Adrenal gland (tissue), 19 donors: ENCODE measurements at regions of chr3 and their contacts with region 1.

Region 1: DNA sequence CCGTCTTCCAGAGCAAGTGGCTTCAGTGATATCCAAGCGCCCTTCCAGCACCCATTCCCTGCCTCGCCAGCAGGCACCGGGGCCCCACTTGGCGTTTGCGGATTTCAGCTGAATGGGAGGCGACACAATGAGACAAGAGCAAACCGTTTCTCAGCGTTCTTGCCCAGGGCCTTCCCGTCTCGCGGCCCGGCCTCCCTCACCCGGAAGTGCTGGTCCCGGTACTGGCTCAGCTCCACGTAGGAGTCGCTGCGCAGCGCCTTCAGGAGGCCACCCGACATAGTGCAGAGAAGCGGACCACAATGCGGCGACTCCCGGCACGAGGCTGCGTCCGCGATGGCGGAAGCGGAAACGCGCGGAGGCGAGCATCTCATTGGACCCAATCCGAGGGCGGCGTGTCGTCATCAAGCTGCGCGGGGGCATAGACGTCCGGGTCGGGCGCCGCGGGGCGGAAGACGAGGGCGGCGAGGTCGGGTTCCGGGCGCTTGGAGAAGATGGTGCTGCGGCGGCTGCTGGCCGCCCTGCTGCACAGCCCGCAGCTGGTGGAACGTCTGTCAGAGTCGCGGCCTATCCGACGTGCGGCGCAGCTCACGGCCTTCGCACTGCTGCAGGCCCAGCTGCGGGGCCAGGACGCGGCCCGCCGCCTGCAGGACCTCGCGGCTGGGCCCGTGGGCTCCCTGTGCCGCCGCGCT is at the start of gene NCBP2:
- DNase-seq: peak; percentile 98 to 99 (median 99)
- H3K4me3 ChIP-seq: peak within 1 kb of the TSS; percentile 65 to 100 (median 84)
- H3K27ac ChIP-seq: peak within 1 kb of the TSS; percentile 57 to 97 (median 89)
- H3K4me1 ChIP-seq: peaks cover 18 to 26% of the 10 kb centered on the region in 2 donors
- H3K27me3 ChIP-seq: no peaks in the 10 kb centered on the region
- CTCF ChIP-seq: peak; percentile 20 to 70 (median 62)
- POLR2A ChIP-seq: peak; percentile 67 to 86
- total RNA-seq, gene NCBP2: 38.5 to 77.8 (median 60.5) TPM

Region 2: GRCh38 chr3:196726788-196727675 is 215.3 kb before region 1 on chr3:
- intact Hi-C with region 1: no loop called
- DNase-seq: no peak
- H3K4me3 ChIP-seq: no peak overlapping the region
- H3K27ac ChIP-seq: no peak overlapping the region
- H3K4me1 ChIP-seq: no peaks in the 10 kb centered on the region
- H3K27me3 ChIP-seq: no peaks in the 10 kb centered on the region
- CTCF ChIP-seq: no peak
- POLR2A ChIP-seq: no peak

Region 3: DNA sequence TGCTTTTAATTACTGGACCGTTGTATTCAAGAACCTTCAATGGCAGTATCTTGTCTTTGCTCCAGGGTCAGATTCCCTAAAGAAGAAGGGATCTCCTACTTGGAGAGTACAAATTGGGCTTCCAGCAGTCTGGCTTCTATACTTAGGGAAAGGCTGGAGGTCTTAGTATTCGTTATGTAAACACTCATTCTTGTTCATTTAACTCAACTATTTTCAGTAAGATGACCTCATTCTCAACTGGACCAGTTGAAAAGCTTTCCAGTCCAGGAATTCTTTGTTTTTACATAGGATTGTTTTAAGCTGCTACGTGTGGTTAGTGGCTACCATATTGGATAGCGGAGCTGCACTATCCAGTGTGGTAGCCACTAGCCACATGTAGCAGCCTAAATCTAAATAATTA is 70.1 kb before region 1 on chr3:
- intact Hi-C with region 1: loop called in 1 of 2 experiments (anchors 10 kb)
- DNase-seq: no peak
- H3K4me3 ChIP-seq: no peak overlapping the region
- H3K27ac ChIP-seq: no peak overlapping the region
- H3K4me1 ChIP-seq: peaks cover 9 to 22% of the 10 kb centered on the region in 2 donors
- H3K27me3 ChIP-seq: no peaks in the 10 kb centered on the region
- CTCF ChIP-seq: no peak
- POLR2A ChIP-seq: no peak

Region 4: DNA sequence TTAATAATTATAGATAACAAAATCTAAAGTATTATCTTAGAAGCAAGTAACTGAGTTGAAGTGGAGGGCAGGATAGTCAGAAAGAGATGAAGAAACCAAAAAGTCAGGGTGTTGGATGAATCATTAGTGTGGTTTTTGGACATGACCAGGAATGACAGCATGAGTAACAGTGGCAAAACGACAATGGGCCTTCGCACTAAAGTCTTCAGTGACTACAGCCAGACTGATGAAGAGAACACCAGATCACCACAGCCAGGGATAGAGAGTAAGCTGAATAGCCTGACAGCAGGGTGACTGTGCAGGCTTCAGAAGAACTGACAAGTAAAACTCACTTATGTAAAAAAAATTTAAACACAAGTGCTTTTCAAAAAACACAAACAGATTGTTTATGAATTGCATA is 183.3 kb after region 1 on chr3:
- intact Hi-C with region 1: no loop called
- DNase-seq: no peak
- H3K4me3 ChIP-seq: no peak overlapping the region
- H3K27ac ChIP-seq: no peak overlapping the region
- H3K4me1 ChIP-seq: no peaks in the 10 kb centered on the region
- H3K27me3 ChIP-seq: no peaks in the 10 kb centered on the region
- CTCF ChIP-seq: no peak
- POLR2A ChIP-seq: no peak

Region 5: GRCh38 chr3:197203714-197204146 is 261.4 kb after region 1 on chr3:
- intact Hi-C with region 1: no loop called
- DNase-seq: no peak
- H3K4me3 ChIP-seq: no peak overlapping the region
- H3K27ac ChIP-seq: no peak overlapping the region
- H3K4me1 ChIP-seq: peaks cover 17 to 27% of the 10 kb centered on the region in 2 donors
- H3K27me3 ChIP-seq: no peaks in the 10 kb centered on the region
- CTCF ChIP-seq: no peak
- POLR2A ChIP-seq: no peak

Region 6: DNA sequence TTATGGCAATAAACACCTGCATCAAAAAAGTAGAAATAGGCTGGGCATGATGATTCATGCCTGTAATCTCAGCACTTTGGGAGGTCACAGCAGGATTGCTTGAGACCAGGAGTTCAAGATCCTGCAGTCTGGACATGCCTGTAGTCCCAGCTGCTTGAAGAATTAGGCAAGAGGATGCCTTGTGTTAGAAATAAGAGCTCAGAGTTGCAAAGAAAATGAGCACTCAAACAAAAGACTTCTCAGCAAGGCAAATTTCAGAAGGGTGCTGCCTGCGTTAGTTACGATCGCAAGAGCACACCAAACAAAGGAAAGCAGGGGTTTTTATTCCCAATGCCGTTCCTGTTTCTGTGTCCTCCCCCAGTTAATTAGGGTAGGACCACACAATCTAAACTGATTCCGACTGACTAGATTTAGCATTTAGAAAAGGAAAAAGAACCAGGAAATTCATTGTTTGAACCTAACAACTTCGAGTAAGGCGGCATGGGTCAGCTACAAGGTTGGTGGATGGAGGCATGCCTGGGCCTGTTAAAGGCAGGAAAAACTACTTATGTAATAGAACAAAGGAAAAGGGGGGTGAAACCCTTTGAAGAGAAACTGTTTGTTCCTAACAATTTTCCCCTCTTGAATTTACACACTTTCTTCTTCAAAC is 300.5 kb after region 1 on chr3:
- intact Hi-C with region 1: no loop called
- DNase-seq: no peak
- H3K4me3 ChIP-seq: no peak overlapping the region
- H3K27ac ChIP-seq: no peak overlapping the region
- H3K4me1 ChIP-seq: peaks cover 0 to 15% of the 10 kb centered on the region in 2 donors
- H3K27me3 ChIP-seq: no peaks in the 10 kb centered on the region
- CTCF ChIP-seq: no peak
- POLR2A ChIP-seq: no peak